Activated CD4-positive, alpha-beta memory T cell treated with anti-CD3 and anti-CD28 coated beads for 36 hours (primary cell): ENCODE measurements at regions of chr15 and their contacts with region 1.

Region 1: DNA sequence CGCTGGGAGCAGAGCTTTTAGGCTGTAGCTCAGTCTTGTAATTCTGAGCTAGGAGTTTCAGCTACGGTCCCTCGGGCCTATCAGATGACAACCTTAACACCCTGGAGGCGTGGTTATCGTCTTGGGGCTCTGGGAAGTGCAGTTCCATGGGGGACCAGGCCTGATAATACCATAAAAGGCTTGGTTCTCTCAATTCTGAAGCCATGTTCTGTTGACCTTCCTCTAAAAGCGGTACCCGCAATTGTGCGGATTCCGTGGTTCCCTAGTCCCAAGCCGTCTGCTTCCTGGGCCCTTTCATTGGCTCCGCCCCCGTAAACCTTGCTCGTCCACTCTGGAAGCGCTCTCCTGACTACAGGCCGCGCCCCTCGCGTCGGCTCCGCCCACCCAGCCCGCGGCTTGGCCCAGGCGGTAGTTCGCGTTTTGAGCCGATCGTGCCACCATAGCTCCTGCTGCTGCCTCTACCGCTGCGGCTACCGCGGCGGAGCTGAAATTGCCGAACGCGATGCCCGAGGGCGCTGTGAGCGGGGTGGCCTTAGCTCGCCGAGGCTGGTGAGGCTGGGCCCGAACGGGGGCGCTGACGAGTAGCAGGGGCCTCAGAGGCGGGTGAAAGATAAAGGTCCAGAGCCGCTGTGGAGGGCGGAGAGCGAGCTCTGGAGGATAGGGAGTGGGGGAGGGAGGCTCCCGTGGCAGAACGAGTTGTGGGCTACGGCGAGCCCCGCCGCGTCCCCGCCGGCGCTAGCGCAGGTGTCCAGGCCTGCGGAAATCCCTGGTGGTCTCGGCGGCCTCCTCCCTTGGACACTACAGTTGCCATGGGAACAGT is at the start of gene MAPKBP1:
- DNase-seq: peak; percentile 99
- H3K4me3 Mint-ChIP-seq: peak within 1 kb of the TSS; percentile 92
- H3K27ac Mint-ChIP-seq: peak within 1 kb of the TSS; percentile 95
- H3K4me1 Mint-ChIP-seq: peaks cover 55% of the 10 kb centered on the region
- H3K27me3 Mint-ChIP-seq: no peaks in the 10 kb centered on the region
- total RNA-seq, gene MAPKBP1: 16.1 to 16.6 TPM

Region 2: DNA sequence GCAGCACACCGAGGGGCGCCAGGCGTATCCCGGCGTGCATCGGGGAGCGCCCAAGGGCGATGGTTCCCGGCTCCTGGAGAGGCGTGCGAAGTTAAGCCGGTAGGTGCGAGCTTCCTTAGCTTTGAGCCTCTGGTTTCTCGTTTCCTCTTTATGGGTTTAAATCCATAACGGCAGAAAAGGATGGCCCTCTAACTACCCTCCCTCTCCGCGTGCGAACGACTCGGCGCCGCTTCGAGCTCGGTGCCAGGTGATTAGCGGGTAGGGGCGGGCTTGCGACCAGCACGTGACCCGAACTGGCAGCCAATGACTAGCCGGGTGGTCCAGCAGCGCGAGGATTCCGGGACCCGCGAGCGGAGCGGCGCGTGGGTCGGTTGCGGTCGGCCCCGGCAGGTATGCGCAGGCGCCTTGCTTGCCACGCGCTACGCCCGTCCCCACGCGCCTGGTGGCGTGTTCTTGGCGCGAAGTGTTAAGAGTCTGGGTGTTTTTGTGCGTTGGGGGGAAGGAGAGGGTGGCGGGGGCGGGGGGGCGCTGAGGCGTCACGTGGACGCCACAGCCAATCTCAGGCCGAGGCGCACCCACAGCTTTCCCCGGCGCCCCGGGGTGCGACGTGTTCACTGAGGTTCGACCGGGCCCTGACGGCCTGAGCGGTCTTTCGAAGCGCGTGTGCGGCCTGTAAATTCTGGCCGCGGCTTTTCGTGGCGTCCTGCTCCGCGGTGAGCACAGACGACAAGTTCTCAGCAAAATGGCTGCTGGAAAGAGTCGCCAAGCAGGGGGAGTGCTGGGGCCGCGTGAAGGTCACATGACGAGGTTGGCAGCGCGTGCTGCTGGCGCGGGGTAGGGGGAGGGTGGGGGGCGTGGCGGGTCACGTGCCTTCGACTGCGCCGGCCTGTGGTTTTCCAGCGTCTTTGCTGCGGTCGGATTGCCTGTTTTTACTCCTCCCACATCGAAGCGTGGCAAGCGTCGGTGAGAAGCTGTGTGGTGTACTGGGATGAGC is 152.8 kb before region 1 on chr15:
- CTCF ChIA-PET with region 1: no interaction called
- POLR2A ChIA-PET with region 1: interaction called, 3 read pairs
- intact Hi-C with region 1: loop called (anchors 1 kb)
- DNase-seq: peak; percentile 90
- H3K4me3 Mint-ChIP-seq: peak overlapping the region; percentile 76
- H3K27ac Mint-ChIP-seq: peak overlapping the region; percentile 69
- H3K4me1 Mint-ChIP-seq: peaks cover 16% of the 10 kb centered on the region
- H3K27me3 Mint-ChIP-seq: no peaks in the 10 kb centered on the region

Region 3: GRCh38 chr15:41669701-41670100 is 104.6 kb before region 1 on chr15:
- CTCF ChIA-PET with region 1: no interaction called
- POLR2A ChIA-PET with region 1: no interaction called
- intact Hi-C with region 1: no loop called
- DNase-seq: no peak
- H3K4me3 Mint-ChIP-seq: no peak overlapping the region
- H3K27ac Mint-ChIP-seq: no peak overlapping the region
- H3K4me1 Mint-ChIP-seq: peaks cover 39% of the 10 kb centered on the region
- H3K27me3 Mint-ChIP-seq: no peaks in the 10 kb centered on the region

Region 4: DNA sequence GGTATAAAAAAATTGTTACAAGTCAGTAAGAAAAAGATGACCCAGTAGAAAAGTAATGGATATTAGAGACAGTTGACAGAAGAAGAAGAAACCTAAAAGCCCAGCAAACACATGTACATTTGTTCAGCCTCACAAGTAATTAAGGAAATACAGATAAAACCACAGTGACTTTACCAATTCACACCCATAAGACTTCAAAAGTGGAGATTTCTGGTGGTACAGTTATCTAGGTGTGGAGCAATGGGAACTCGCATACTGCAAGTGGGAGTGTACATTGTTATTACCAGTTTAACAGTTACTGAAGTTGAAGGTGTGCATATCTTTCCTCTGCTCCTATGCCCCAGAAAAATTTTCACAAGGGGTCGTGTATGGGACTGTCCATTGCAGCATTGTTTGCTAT is 18.1 kb before region 1 on chr15:
- CTCF ChIA-PET with region 1: interaction called, 11 read pairs
- POLR2A ChIA-PET with region 1: no interaction called
- intact Hi-C with region 1: no loop called
- DNase-seq: no peak
- H3K4me3 Mint-ChIP-seq: no peak overlapping the region
- H3K27ac Mint-ChIP-seq: no peak overlapping the region
- H3K4me1 Mint-ChIP-seq: no peaks in the 10 kb centered on the region
- H3K27me3 Mint-ChIP-seq: no peaks in the 10 kb centered on the region

Region 5: GRCh38 chr15:41827880-41828806 is 53.9 kb after region 1 on chr15 and contains the start of gene JMJD7:
- CTCF ChIA-PET with region 1: interaction called, 21 read pairs
- POLR2A ChIA-PET with region 1: no interaction called
- intact Hi-C with region 1: loop called (anchors 1 kb)
- DNase-seq: peak; percentile 96
- H3K4me3 Mint-ChIP-seq: peak within 1 kb of the TSS; percentile 80
- H3K27ac Mint-ChIP-seq: peak within 1 kb of the TSS; percentile 52
- H3K4me1 Mint-ChIP-seq: peaks cover 40% of the 10 kb centered on the region
- H3K27me3 Mint-ChIP-seq: no peaks in the 10 kb centered on the region
- total RNA-seq, gene JMJD7: 17.9 to 24.8 TPM

Region 6: DNA sequence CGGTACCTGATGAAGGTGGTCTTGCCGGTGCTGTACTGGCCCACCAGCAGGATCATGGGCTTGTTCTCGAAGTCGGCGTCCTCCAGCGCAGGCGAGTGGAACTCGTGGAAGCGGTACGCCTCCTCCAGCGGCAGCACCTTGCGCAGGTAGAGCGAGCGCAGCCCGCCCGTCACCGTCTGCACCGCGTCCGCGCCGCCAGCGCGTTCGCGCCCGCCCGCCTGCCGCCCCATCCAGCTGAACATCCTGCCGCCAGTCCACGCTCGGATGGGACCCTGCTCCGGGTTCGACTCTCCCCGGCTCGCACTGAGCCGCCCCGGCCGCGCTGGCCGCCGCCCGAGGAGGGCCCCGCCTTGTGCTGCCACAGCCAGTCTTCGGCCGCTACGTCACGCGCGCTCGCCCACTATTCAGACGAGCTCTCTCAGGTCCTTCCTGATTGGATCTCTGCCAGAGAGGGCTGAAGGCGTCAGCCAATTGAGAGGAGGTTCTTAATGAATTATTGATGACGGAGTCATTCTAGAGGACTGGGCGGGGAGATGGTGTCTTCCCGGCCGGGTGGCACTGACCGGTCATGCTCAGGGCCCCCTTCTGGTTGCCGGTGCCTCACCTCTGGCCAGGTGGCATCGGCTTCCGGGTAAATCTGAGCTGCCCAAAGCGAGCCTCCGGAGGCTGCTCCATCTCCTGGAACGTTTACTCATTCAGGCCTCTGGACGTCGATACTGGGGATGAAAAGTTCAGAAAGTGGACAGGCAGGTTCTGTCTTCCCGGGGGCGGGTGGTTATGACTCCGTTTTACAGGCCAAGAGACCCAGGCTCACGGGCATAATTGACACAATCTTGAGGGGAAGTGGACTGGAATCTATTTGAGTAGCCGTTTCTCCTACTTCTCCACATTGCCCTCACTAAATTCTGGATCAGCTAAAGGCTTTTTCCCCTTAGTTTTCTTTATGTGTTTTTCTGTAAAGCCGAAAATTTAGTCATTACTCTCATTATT is 198.3 kb after region 1 on chr15 and contains the start of gene EHD4:
- CTCF ChIA-PET with region 1: interaction called, 6 read pairs
- POLR2A ChIA-PET with region 1: interaction called, 10 read pairs
- intact Hi-C with region 1: loop called (anchors 2 kb)
- DNase-seq: peak; percentile 98
- H3K4me3 Mint-ChIP-seq: peak within 1 kb of the TSS; percentile 90
- H3K27ac Mint-ChIP-seq: peak within 1 kb of the TSS; percentile 97
- H3K4me1 Mint-ChIP-seq: peaks cover 53% of the 10 kb centered on the region
- H3K27me3 Mint-ChIP-seq: peaks cover 7% of the 10 kb centered on the region
- total RNA-seq, gene EHD4: 43.6 to 45.0 TPM